Left ventricle myocardium inferior (tissue), 1 donor: ENCODE measurements at regions of chr7 and their contacts with region 1.

Region 1: DNA sequence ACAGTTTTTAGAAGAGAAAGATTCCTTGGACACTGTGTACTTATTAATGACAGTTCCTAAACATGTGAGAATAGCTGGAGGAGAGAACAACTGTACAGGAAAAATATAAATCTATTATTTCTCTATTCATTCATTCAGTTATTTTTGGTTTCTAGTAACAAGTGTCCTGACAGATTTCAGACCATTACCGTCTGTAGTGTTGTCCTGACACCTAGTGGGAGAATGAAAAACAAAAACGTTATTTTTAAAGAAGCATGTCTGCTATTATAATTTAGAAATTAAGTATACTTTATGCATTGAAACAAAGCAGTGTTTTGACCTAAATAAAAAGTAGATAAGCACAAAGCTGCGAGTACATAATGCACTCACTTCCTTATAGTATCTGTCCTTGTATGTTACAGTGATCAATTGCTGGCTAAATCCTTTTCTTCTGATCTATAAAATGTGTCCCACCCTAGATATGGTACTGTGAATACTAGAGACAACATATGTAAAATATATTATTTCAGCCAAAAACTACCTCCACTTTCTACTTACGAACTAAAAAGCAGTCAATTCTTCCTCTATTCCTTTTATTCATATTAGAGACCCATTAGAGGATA is 575.6 kb downstream of the ARL4A start:
- DNase-seq: no peak
- H3K4me3 ChIP-seq: no peak overlapping the region
- H3K27ac ChIP-seq: no peak overlapping the region
- H3K4me1 ChIP-seq: no peaks in the 10 kb centered on the region
- H3K27me3 ChIP-seq: no peaks in the 10 kb centered on the region
- CTCF ChIP-seq: peak; percentile 75

Region 2: DNA sequence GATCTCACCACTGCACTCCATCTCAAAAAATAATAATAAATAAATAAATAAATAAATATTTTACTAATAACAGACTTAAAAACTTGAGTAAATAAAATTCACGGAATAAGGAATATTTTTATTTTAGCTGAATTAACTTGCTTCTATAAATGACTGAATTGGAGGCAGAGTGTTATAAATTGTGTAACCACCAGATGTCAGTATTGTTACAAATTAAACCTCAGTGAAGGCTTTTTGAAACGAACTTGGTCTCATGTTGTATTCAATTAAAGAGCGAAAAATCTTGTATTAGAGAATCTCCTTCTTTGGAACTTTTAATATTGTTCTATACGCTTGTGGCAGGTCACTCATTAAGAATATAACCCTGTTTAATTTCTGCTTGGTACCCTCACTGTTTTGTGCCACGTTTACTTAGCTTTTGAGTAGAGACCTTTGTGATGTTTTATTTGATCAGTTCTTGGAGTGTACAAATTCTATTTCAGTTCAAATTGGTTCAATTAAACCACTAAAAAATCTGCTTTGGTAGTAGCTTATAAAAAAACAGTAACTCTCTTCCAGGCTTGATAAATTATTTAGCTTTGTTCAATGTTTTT is 738.1 kb before region 1 on chr7:
- intact Hi-C with region 1: loop called (anchors 2 kb)
- DNase-seq: no peak
- H3K4me3 ChIP-seq: no peak overlapping the region
- H3K27ac ChIP-seq: no peak overlapping the region
- H3K4me1 ChIP-seq: no peaks in the 10 kb centered on the region
- H3K27me3 ChIP-seq: peaks cover 8% of the 10 kb centered on the region
- CTCF ChIP-seq: peak; percentile 78

Region 3: GRCh38 chr7:12638851-12639467 is 624.1 kb before region 1 on chr7:
- intact Hi-C with region 1: loop called (anchors 2 kb)
- DNase-seq: no peak
- H3K4me3 ChIP-seq: no peak overlapping the region
- H3K27ac ChIP-seq: no peak overlapping the region
- H3K4me1 ChIP-seq: peaks cover 8% of the 10 kb centered on the region
- H3K27me3 ChIP-seq: peaks cover 13% of the 10 kb centered on the region
- CTCF ChIP-seq: peak; percentile 78